GM12878 (cell line): ENCODE measurements at regions of chr11 and their contacts with region 1.

Region 1: GRCh38 chr11:76140912-76141574 is 65.3 kb downstream of the WNT11 start:
- DNase-seq: no peak
- ATAC-seq: no peak
- H3K4me3 ChIP-seq: no peak overlapping the region
- H3K27ac ChIP-seq: no peak overlapping the region
- H3K4me1 ChIP-seq: no peaks in the 10 kb centered on the region
- H3K27me3 ChIP-seq: no peaks in the 10 kb centered on the region
- CTCF ChIP-seq: no peak
- EP300 ChIP-seq: no peak
- POLR2A ChIP-seq: 0 out of 2 replicates have a peak, but pooled peaks have one; percentile 32
- RAD21 ChIP-seq: no peak

Region 2: DNA sequence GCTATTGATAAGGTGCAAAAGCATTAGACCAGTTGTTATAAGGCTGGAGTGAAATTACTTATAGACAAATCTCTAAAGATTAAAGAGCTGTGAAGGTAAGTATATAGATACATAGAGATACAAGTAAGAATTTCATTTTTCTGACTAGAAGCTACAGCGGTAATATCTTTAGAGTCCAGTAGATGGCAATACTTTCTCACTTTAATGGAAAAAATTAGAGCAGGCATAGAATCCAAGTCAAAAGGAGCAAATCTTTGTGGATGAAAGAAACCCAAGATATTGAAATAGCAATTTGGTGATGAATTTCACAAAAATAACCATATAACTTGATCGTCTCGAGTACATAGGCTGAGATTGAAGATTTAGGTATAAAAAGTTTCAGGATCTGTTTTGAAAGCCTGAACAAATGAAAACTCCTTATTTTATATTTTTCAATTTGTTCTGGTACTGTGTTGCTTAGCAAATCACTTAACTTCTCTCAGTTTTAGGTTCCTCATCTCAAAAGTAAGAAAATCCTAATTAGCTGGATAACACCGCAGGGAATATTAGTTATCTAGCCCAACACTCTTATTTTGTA is 244.1 kb before region 1 on chr11:
- CTCF ChIA-PET with region 1: interaction called, 10 read pairs
- POLR2A ChIA-PET with region 1: no interaction called
- RAD21 ChIA-PET with region 1: interaction called, 6 read pairs
- SMC1A ChIA-PET with region 1: interaction called, 3 read pairs
- in situ Hi-C with region 1: no loop called
- intact Hi-C with region 1: no loop called
- DNase-seq: no peak
- ATAC-seq: peak; percentile 46
- H3K4me3 ChIP-seq: no peak overlapping the region
- H3K27ac ChIP-seq: no peak overlapping the region
- H3K4me1 ChIP-seq: peaks cover 8% of the 10 kb centered on the region
- H3K27me3 ChIP-seq: no peaks in the 10 kb centered on the region
- CTCF ChIP-seq: peak; percentile 55 to 62 (median 57)
- EP300 ChIP-seq: no peak
- POLR2A ChIP-seq: no peak
- RAD21 ChIP-seq: peak; percentile 77

Region 3: DNA sequence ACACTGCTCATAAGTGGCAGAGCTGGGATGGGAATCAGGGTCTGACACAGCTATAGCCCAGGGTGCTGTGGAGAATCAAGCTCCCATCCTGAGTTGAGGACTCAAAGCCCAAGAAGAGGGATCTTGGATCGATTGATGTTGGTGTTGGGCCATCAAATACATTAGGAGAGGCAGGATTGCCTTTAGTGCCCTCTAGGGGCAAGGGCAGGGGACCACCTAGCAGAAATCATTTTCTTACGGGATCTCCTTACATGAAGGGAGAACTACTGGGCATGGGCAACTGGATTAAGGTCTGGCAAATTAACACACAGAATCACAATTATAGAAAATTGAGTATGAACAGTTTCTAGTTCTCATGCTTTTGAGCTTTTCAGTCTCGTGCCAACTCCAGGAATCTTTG is 278.9 kb after region 1 on chr11:
- CTCF ChIA-PET with region 1: no interaction called
- POLR2A ChIA-PET with region 1: no interaction called
- RAD21 ChIA-PET with region 1: no interaction called
- SMC1A ChIA-PET with region 1: no interaction called
- in situ Hi-C with region 1: no loop called
- intact Hi-C with region 1: no loop called
- DNase-seq: no peak
- ATAC-seq: peak; percentile 48
- H3K4me3 ChIP-seq: no peak overlapping the region
- H3K27ac ChIP-seq: no peak overlapping the region
- H3K4me1 ChIP-seq: peaks cover 5% of the 10 kb centered on the region
- H3K27me3 ChIP-seq: no peaks in the 10 kb centered on the region
- CTCF ChIP-seq: peak; percentile 45 to 66 (median 57); a peak in 5 of 6 replicates
- EP300 ChIP-seq: no peak
- POLR2A ChIP-seq: no peak
- RAD21 ChIP-seq: peak; percentile 47